GM12878 (cell line): ENCODE measurements at regions of chr17 and their contacts with region 1.

Region 1: DNA sequence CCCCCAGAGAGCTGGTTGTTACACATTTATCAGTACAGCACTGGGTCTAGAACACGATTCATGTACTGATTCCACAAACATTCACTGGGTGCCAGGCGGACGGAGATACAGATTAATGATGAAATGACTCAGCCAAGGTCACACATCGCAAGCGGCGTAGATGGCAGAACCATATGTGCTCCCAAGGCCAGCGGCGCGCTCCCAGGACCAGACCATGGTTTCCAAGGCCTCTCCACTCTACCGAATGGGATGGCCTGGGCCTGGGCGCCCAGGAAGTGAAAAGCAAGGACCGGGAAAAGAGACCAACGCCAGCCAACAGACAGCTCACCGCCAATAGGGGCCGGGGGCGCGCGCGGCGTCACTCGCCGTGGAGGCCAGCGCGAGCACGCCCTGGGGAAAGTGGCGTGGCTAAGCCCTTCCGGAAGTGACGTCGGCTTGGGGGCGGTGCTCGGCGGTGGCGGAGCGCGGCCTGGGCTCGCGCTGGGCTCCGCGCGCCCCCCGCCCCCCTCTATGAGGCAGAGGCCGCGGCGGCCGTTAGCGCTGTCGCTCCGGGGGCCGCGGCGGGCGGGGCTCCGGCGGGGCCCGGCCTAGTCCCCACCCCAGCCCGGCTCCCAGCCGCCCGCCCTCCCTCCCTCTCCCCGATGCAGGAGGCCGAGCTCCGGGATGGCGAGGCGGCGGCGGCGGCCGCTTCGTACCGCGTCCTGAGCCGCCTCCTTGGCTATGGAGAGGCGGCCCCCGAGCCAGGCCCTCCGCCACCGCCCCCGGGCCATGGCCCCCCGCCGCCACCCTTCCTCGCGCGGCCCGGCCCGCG is at the start of gene SOCS7:
- DNase-seq: peak; percentile 58
- ATAC-seq: peak; percentile 86
- H3K4me3 ChIP-seq: peak within 1 kb of the TSS; percentile 75
- H3K27ac ChIP-seq: peak within 1 kb of the TSS; percentile 91
- H3K4me1 ChIP-seq: peaks cover 4% of the 10 kb centered on the region
- H3K27me3 ChIP-seq: no peaks in the 10 kb centered on the region
- CTCF ChIP-seq: no peak
- EP300 ChIP-seq: no peak
- POLR2A ChIP-seq: peak; percentile 94
- RAD21 ChIP-seq: no peak
- polyA plus RNA-seq, gene SOCS7: 0.93 to 1.6 TPM

Region 2: DNA sequence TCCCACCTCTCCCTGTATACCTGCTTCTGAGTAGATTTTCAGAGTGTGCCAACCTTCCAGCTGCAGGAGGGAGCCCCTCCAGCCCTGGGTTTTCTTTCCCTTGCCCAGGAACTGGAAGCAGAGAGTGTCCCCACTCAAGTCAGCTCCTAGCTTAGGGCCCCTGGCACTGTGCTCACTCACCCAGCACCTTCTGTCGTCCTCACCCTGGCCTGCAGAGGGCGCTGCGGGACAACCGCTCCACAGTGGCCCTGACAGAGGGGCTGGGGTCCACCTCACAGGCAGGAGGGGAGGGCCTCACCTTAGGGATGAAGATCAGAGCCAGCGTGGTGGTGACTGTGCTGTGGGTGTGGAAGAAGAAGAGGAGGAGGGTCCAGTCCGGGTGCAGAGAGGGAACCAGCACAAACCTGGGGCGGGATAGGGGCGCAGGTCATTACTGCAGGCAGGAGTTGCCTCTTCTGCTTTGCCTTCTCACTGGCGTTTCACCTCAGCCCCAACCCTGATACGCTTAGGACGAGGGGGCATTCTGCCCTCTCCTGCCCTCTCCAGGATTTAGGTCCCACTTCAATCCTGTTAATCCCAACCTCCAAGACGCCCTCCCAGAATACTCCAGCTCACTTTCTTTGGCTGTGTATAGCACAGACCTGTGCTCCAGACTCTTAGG is 17.9 kb before region 1 on chr17:
- CTCF ChIA-PET with region 1: interaction called, 21 read pairs
- POLR2A ChIA-PET with region 1: interaction called, 3 read pairs
- RAD21 ChIA-PET with region 1: interaction called, 3 read pairs
- SMC1A ChIA-PET with region 1: interaction called, 4 read pairs
- in situ Hi-C with region 1: no loop called
- intact Hi-C with region 1: no loop called
- DNase-seq: no peak
- ATAC-seq: peak; percentile 84
- H3K4me3 ChIP-seq: no peak overlapping the region
- H3K27ac ChIP-seq: no peak overlapping the region
- H3K4me1 ChIP-seq: no peaks in the 10 kb centered on the region
- H3K27me3 ChIP-seq: no peaks in the 10 kb centered on the region
- CTCF ChIP-seq: peak; percentile 62 to 73 (median 67)
- EP300 ChIP-seq: no peak
- POLR2A ChIP-seq: no peak
- RAD21 ChIP-seq: peak; percentile 44; the same call in 1 of the 2 replicates

Region 3: GRCh38 chr17:38397227-38397626 is 45.6 kb after region 1 on chr17:
- CTCF ChIA-PET with region 1: interaction called, 20 read pairs
- POLR2A ChIA-PET with region 1: interaction called, 3 read pairs
- RAD21 ChIA-PET with region 1: interaction called, 6 read pairs
- SMC1A ChIA-PET with region 1: interaction called, 4 read pairs
- in situ Hi-C with region 1: no loop called
- intact Hi-C with region 1: no loop called
- DNase-seq: no peak
- ATAC-seq: no peak
- H3K4me3 ChIP-seq: no peak overlapping the region
- H3K27ac ChIP-seq: no peak overlapping the region
- H3K4me1 ChIP-seq: no peaks in the 10 kb centered on the region
- H3K27me3 ChIP-seq: no peaks in the 10 kb centered on the region
- CTCF ChIP-seq: no peak
- EP300 ChIP-seq: no peak
- POLR2A ChIP-seq: no peak
- RAD21 ChIP-seq: no peak

Region 4: DNA sequence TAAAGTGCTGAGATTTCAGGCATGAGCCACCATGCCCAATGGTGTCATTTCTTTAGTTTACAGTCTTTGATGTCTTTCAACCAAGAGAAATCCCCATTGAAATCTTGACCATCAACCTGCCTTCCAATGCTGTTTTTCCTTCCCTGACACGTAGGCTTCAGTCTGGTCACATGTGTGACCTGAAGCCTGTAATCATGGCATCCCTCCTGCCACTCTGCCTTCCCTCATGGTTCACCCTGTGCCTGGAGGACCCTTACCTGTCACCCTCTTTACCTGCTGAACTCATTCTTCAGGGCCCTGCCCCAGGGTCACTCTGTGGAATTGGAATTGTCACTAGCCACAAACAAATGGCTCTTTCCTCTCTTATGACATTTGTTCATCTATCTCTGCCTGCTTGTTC is 58.6 kb after region 1 on chr17:
- CTCF ChIA-PET with region 1: interaction called, 349 read pairs
- POLR2A ChIA-PET with region 1: interaction called, 16 read pairs
- RAD21 ChIA-PET with region 1: interaction called, 172 read pairs
- SMC1A ChIA-PET with region 1: interaction called, 161 read pairs
- in situ Hi-C with region 1: loop called (anchors 5 kb)
- intact Hi-C with region 1: loop called (anchors 1 kb)
- DNase-seq: no peak
- ATAC-seq: no peak
- H3K4me3 ChIP-seq: no peak overlapping the region
- H3K27ac ChIP-seq: no peak overlapping the region
- H3K4me1 ChIP-seq: peaks cover 5% of the 10 kb centered on the region
- H3K27me3 ChIP-seq: no peaks in the 10 kb centered on the region
- CTCF ChIP-seq: no peak
- EP300 ChIP-seq: no peak
- POLR2A ChIP-seq: no peak
- RAD21 ChIP-seq: no peak

Region 5: GRCh38 chr17:38421171-38421841 is 69.7 kb after region 1 on chr17:
- CTCF ChIA-PET with region 1: interaction called, 349 read pairs
- POLR2A ChIA-PET with region 1: no interaction called
- RAD21 ChIA-PET with region 1: interaction called, 24 read pairs
- SMC1A ChIA-PET with region 1: interaction called, 161 read pairs
- in situ Hi-C with region 1: loop called (anchors 5 kb)
- intact Hi-C with region 1: no loop called
- DNase-seq: no peak
- ATAC-seq: no peak
- H3K4me3 ChIP-seq: no peak overlapping the region
- H3K27ac ChIP-seq: no peak overlapping the region
- H3K4me1 ChIP-seq: peaks cover 6% of the 10 kb centered on the region
- H3K27me3 ChIP-seq: peaks cover 4 to 6% of the 10 kb centered on the region in 2 experiments; a peak in 3 of 4 replicates
- CTCF ChIP-seq: no peak
- EP300 ChIP-seq: no peak
- POLR2A ChIP-seq: no peak
- RAD21 ChIP-seq: no peak

Region 6: DNA sequence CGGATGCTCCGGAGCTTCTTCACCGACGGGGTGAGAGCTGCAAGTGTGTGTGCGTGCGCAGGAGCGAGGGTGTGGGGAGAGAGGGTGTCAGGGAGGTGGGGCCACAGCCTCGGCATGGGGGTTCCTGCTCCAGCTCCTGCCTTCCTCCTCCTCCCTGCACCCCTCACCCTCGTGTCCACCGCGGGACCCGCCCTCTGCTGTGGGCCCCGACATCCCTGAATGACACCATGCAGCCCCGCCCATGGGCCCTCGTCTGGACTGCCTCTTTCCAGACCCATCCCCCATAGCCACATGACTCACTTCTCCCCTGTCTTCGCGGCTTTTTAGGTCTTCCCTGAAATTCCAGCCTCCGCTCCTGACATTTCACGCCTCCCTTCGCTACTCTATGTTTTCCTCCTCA is 118.3 kb after region 1 on chr17:
- CTCF ChIA-PET with region 1: interaction called, 5 read pairs
- POLR2A ChIA-PET with region 1: no interaction called
- RAD21 ChIA-PET with region 1: no interaction called
- SMC1A ChIA-PET with region 1: interaction called, 3 read pairs
- in situ Hi-C with region 1: loop called (anchors 10 kb)
- intact Hi-C with region 1: no loop called
- DNase-seq: no peak
- ATAC-seq: no peak
- H3K4me3 ChIP-seq: no peak overlapping the region
- H3K27ac ChIP-seq: no peak overlapping the region
- H3K4me1 ChIP-seq: no peaks in the 10 kb centered on the region
- H3K27me3 ChIP-seq: no peaks in the 10 kb centered on the region
- CTCF ChIP-seq: no peak
- EP300 ChIP-seq: no peak
- POLR2A ChIP-seq: no peak
- RAD21 ChIP-seq: no peak

Region 7: DNA sequence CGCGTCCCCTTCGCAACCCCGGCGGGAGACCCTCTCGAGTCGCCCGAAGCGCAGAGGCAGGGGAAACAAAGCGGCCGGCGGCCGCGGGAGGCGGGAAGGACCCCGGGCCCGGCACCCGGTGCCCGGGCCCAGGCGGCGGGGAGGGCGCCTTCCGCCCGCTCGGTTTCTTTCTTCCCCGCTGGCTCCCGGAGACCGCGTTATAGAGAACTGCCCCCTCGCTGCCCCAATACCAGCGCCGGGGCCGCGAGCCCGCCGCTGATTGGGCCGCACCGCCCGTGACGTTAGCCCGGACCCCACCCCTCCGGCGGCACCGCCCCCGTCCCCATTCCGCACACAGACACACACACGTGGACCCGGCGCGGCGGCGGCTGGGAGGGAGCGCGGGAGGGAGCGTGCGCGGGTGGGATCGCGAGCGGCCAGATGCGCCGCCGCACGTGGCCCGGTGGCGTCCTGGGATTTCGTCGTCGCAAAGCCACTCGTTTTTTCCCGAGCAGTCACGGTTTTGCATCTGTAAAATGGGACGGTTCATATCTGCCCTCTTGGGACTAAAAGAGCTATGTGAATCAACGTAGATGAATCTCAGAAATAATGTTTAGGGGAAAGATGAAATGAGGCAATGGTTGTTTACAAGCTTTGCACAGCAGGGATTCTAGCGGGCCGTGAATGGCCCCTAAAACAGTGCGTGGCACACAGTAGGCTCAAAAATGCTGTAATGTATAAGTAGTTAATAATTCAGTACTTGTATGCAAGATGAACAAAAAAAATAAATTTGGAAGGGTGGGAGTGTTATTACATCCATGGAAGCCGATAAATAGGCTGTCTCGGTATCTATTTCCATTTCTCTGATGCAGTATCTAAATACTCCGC is 323.4 kb after region 1 on chr17 and contains the start of gene EPOP:
- CTCF ChIA-PET with region 1: no interaction called
- POLR2A ChIA-PET with region 1: no interaction called
- RAD21 ChIA-PET with region 1: no interaction called
- SMC1A ChIA-PET with region 1: interaction called, 4 read pairs
- in situ Hi-C with region 1: no loop called
- intact Hi-C with region 1: loop called (anchors 10 kb)
- DNase-seq: no peak
- ATAC-seq: peak; percentile 88
- H3K4me3 ChIP-seq: peak within 1 kb of the TSS; percentile 84
- H3K27ac ChIP-seq: no peak within 1 kb of the TSS
- H3K4me1 ChIP-seq: peaks cover 34% of the 10 kb centered on the region
- H3K27me3 ChIP-seq: peaks cover 8 to 12% of the 10 kb centered on the region in 2 experiments; a peak in 2 of 4 replicates
- CTCF ChIP-seq: no peak
- EP300 ChIP-seq: no peak
- POLR2A ChIP-seq: peak; percentile 62
- RAD21 ChIP-seq: no peak
- polyA plus RNA-seq, gene EPOP: 0.53 to 1.4 TPM